CD8-positive, alpha-beta T cell (primary cell): ENCODE measurements at regions of chrX and their contacts with region 1.

Region 1: DNA sequence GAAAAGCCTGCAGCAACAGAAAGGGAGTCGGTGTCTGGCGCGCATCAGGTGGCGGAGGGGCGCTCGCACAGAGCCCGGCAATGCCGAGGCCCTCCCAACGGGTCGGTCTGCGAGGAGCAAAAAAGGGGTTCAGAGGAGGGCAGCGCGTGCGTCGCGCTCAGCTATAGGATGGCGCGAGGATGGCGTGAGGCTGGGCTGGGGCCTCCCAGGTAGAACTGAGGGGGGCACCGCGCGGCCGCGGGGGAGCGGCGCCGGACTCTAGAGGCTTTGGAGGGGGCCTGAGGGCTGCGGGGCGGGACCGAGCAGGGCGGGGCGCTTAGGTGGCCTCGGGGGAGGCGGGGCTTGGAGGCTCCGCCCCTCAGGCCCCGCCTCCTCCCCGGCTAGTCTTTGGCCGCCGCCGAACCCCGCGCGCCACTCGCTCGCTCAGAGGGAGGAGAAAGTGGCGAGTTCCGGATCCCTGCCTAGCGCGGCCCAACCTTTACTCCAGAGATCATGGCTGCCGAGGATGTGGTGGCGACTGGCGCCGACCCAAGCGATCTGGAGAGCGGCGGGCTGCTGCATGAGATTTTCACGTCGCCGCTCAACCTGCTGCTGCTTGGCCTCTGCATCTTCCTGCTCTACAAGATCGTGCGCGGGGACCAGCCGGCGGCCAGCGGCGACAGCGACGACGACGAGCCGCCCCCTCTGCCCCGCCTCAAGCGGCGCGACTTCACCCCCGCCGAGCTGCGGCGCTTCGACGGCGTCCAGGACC is at the start of gene PGRMC1:
- DNase-seq: peak; percentile 51 to 90 (median 76)
- ATAC-seq: peak; percentile 94
- H3K4me3 ChIP-seq: peak within 1 kb of the TSS; percentile 55 to 68
- H3K4me3 Mint-ChIP-seq: peak within 1 kb of the TSS; percentile 83
- H3K27ac ChIP-seq: peak within 1 kb of the TSS; percentile 25 to 63
- H3K27ac Mint-ChIP-seq: peak within 1 kb of the TSS; percentile 91
- H3K4me1 ChIP-seq: peaks cover 8% of the 10 kb centered on the region
- H3K4me1 Mint-ChIP-seq: peaks cover 39% of the 10 kb centered on the region
- H3K27me3 ChIP-seq: no peaks in the 10 kb centered on the region
- H3K27me3 Mint-ChIP-seq: no peaks in the 10 kb centered on the region
- CTCF ChIP-seq: no peak
- total RNA-seq, gene PGRMC1: 15.2 to 18.4 TPM

Region 2: GRCh38 chrX:117376460-117376859 is 1859.6 kb before region 1 on chrX:
- CTCF ChIA-PET with region 1: no interaction called
- POLR2A ChIA-PET with region 1: no interaction called
- intact Hi-C with region 1: no loop called
- DNase-seq: no peak
- ATAC-seq: no peak
- H3K4me3 ChIP-seq: no peak overlapping the region
- H3K4me3 Mint-ChIP-seq: no peak overlapping the region
- H3K27ac ChIP-seq: no peak overlapping the region
- H3K27ac Mint-ChIP-seq: no peak overlapping the region
- H3K4me1 ChIP-seq: no peaks in the 10 kb centered on the region
- H3K4me1 Mint-ChIP-seq: no peaks in the 10 kb centered on the region
- H3K27me3 ChIP-seq: no peaks in the 10 kb centered on the region
- H3K27me3 Mint-ChIP-seq: no peaks in the 10 kb centered on the region
- CTCF ChIP-seq: no peak

Region 3: GRCh38 chrX:118345401-118346257 is 890.4 kb before region 1 on chrX and contains the start of gene WDR44:
- CTCF ChIA-PET with region 1: no interaction called
- POLR2A ChIA-PET with region 1: no interaction called
- intact Hi-C with region 1: loop called in 1 of 2 experiments (anchors 5 kb)
- DNase-seq: peak; percentile 86 to 96 (median 90)
- ATAC-seq: peak; percentile 90
- H3K4me3 ChIP-seq: peak within 1 kb of the TSS; percentile 70 to 87
- H3K4me3 Mint-ChIP-seq: peak within 1 kb of the TSS; percentile 98
- H3K27ac ChIP-seq: peak within 1 kb of the TSS; percentile 87 to 89
- H3K27ac Mint-ChIP-seq: peak within 1 kb of the TSS; percentile 97
- H3K4me1 ChIP-seq: peaks cover 26% of the 10 kb centered on the region
- H3K4me1 Mint-ChIP-seq: peaks cover 34% of the 10 kb centered on the region
- H3K27me3 ChIP-seq: no peaks in the 10 kb centered on the region
- H3K27me3 Mint-ChIP-seq: no peaks in the 10 kb centered on the region
- CTCF ChIP-seq: no peak
- total RNA-seq, gene WDR44: 9.9 to 11.2 TPM

Region 4: DNA sequence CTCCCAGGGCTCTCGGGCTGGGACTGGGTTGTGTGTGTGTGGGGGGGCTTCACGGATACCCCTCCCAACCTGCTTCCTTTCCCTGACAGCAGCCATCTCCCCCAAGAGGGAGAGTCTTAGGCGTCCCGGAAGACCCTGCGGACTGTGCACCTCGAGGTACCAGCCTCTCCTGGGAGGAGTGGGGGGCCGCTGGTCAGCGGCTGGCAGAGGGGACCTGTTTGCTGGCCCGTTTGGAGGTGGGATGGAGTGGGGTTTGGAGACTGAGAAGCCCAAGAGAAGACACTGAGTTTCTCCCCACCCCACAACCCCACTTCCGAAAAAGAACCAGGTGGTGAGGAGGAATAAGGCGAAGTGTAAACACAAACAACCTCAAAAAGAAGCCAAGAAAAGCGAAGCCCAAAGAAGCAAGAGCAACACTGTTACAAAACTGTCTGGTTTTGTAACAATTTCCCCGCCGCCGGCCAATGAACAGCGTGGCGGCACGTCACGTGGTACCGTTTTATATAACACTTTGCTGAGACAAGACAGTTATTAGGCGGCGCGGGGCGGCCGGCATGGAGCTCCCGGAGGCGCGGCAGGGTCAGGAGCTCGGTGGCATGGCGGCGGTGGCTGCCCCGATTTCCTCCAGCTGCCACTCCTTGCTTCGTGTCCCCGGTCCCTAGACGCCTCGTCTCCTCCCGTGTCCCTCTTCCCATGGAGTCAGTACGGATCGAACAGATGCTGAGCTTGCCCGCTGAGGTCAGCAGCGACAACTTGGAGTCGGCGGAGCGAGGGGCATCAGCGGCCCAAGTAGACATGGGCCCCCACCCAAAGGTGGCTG is 261.7 kb before region 1 on chrX and contains the start of gene LONRF3:
- CTCF ChIA-PET with region 1: no interaction called
- POLR2A ChIA-PET with region 1: no interaction called
- intact Hi-C with region 1: loop called in 1 of 2 experiments (anchors 10 kb)
- DNase-seq: peak; percentile 26 to 80 (median 63)
- ATAC-seq: peak; percentile 50
- H3K4me3 ChIP-seq: peak within 1 kb of the TSS; percentile 59 to 72
- H3K4me3 Mint-ChIP-seq: peak within 1 kb of the TSS; percentile 87
- H3K27ac ChIP-seq: peak within 1 kb of the TSS; percentile 49 to 70
- H3K27ac Mint-ChIP-seq: peak within 1 kb of the TSS; percentile 91
- H3K4me1 ChIP-seq: peaks cover 6% of the 10 kb centered on the region
- H3K4me1 Mint-ChIP-seq: peaks cover 21% of the 10 kb centered on the region
- H3K27me3 ChIP-seq: no peaks in the 10 kb centered on the region
- H3K27me3 Mint-ChIP-seq: peaks cover 8% of the 10 kb centered on the region
- CTCF ChIP-seq: no peak
- total RNA-seq, gene LONRF3: 3.8 to 4.3 TPM

Region 5: GRCh38 chrX:119309661-119310267 is 73.7 kb after region 1 on chrX:
- CTCF ChIA-PET with region 1: no interaction called
- POLR2A ChIA-PET with region 1: no interaction called
- intact Hi-C with region 1: no loop called
- DNase-seq: no peak
- ATAC-seq: no peak
- H3K4me3 ChIP-seq: no peak overlapping the region
- H3K4me3 Mint-ChIP-seq: no peak overlapping the region
- H3K27ac ChIP-seq: no peak overlapping the region
- H3K27ac Mint-ChIP-seq: no peak overlapping the region
- H3K4me1 ChIP-seq: no peaks in the 10 kb centered on the region
- H3K4me1 Mint-ChIP-seq: no peaks in the 10 kb centered on the region
- H3K27me3 ChIP-seq: no peaks in the 10 kb centered on the region
- H3K27me3 Mint-ChIP-seq: peaks cover 4% of the 10 kb centered on the region
- CTCF ChIP-seq: no peak

Region 6: GRCh38 chrX:119398974-119399771 is 163.1 kb after region 1 on chrX and contains the start of gene SLC25A43:
- CTCF ChIA-PET with region 1: no interaction called
- POLR2A ChIA-PET with region 1: no interaction called
- intact Hi-C with region 1: loop called in 1 of 2 experiments (anchors 10 kb)
- DNase-seq: peak in 7 of 9 experiments; percentile 22 to 63 (median 26)
- ATAC-seq: peak; percentile 77
- H3K4me3 ChIP-seq: peak within 1 kb of the TSS; percentile 57 to 58
- H3K4me3 Mint-ChIP-seq: peak within 1 kb of the TSS; percentile 88
- H3K27ac ChIP-seq: peak within 1 kb of the TSS; percentile 20 to 66
- H3K27ac Mint-ChIP-seq: peak within 1 kb of the TSS; percentile 90
- H3K4me1 ChIP-seq: peaks cover 6% of the 10 kb centered on the region
- H3K4me1 Mint-ChIP-seq: peaks cover 24% of the 10 kb centered on the region
- H3K27me3 ChIP-seq: no peaks in the 10 kb centered on the region
- H3K27me3 Mint-ChIP-seq: no peaks in the 10 kb centered on the region
- CTCF ChIP-seq: no peak
- total RNA-seq, gene SLC25A43: 1.1 to 1.4 TPM

Region 7: DNA sequence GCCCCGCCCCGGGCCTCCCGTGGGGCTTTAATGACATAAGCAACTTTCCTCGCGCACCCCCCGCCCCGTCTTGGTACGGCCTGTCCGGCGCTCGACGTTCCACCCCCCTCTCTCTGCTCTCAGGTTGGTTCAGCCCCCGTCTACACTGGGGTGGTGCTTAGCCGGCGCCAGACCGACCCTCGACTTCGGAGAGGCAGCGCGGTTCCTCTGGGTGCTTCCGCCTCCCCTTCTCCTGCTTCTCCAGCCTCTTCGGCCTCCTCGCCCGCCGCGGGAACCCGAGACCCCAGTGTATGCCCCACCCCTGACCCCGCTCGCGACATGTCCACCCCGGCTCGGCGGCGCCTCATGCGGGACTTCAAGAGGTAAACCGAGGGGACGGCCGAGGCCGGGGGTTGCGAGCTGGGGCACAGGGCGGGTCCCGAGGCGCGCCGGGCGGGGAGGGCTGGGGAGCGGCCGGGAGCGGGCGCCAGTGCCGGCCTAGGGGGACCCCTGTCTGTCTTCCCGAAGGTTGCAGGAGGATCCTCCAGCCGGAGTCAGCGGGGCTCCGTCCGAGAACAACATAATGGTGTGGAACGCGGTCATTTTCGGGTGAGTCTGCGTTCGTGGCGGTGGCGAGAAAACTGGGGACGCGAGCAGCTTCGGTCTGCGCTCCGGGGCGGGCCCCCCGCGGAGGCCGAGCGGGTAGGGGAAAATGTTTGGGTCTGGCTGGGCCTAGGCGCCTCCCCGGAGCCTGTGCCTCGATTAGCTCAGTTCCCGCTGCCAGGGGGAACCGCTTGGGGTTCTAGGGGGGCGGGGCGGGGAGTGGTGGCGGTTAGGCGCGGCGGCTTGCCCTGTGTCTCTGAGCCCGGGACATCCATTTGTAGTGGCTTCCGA is 338.6 kb after region 1 on chrX and contains the start of gene UBE2A:
- CTCF ChIA-PET with region 1: no interaction called
- POLR2A ChIA-PET with region 1: no interaction called
- intact Hi-C with region 1: loop called in 1 of 2 experiments (anchors 5 kb)
- DNase-seq: peak; percentile 80 to 95 (median 89)
- ATAC-seq: peak; percentile 95
- H3K4me3 ChIP-seq: peak within 1 kb of the TSS; percentile 70 to 73
- H3K4me3 Mint-ChIP-seq: peak within 1 kb of the TSS; percentile 92
- H3K27ac ChIP-seq: peak within 1 kb of the TSS; percentile 80 to 83
- H3K27ac Mint-ChIP-seq: peak within 1 kb of the TSS; percentile 92
- H3K4me1 ChIP-seq: peaks cover 8% of the 10 kb centered on the region
- H3K4me1 Mint-ChIP-seq: peaks cover 20% of the 10 kb centered on the region
- H3K27me3 ChIP-seq: no peaks in the 10 kb centered on the region
- H3K27me3 Mint-ChIP-seq: no peaks in the 10 kb centered on the region
- CTCF ChIP-seq: no peak
- total RNA-seq, gene UBE2A: 101 to 103 TPM

Region 8: DNA sequence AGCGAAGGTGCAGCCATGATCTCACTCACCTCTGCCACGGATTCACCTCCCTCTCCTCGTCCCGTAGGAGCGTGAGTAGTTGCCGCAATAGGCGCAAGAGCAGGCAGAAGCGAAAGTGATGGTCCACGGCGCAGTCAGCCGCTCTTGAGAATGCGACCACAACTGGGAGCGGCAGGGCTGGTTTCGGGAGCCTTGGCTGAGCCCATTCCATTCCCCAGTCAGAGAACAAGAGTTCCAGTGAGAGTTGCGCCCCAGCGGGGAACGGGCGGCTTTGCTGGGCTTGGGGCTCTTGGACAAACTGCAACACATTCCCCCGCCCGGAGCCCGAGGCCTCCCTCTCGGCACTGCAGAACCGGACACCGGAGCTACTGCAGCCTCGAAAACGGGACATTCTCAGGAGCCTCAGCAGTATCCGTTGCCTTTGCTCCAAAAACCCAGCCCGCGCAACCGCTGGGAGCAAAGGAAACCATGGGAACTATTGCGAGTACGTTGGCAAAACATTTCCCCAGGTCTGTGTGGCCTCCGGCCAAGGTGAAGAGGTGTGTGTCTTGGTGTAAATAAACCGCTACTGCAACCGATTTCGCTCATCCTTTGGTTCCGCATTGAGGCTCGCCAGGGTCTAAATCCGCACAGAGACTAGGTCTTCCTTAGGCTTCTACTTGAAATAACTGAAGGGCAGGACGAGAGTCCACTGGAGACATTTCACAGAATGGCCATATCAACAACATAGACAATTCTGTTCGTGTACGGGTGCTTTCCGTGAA is 1008.9 kb after region 1 on chrX:
- CTCF ChIA-PET with region 1: no interaction called
- POLR2A ChIA-PET with region 1: no interaction called
- intact Hi-C with region 1: loop called in 1 of 2 experiments (anchors 10 kb)
- DNase-seq: peak; percentile 28 to 77 (median 59)
- ATAC-seq: peak; percentile 88
- H3K4me3 ChIP-seq: peak overlapping the region; percentile 87 to 90
- H3K4me3 Mint-ChIP-seq: peak overlapping the region; percentile 98
- H3K27ac ChIP-seq: peak overlapping the region; percentile 73 to 90
- H3K27ac Mint-ChIP-seq: peak overlapping the region; percentile 93
- H3K4me1 ChIP-seq: peaks cover 15% of the 10 kb centered on the region
- H3K4me1 Mint-ChIP-seq: peaks cover 26% of the 10 kb centered on the region
- H3K27me3 ChIP-seq: no peaks in the 10 kb centered on the region
- H3K27me3 Mint-ChIP-seq: peaks cover 2% of the 10 kb centered on the region
- CTCF ChIP-seq: no peak

Region 9: DNA sequence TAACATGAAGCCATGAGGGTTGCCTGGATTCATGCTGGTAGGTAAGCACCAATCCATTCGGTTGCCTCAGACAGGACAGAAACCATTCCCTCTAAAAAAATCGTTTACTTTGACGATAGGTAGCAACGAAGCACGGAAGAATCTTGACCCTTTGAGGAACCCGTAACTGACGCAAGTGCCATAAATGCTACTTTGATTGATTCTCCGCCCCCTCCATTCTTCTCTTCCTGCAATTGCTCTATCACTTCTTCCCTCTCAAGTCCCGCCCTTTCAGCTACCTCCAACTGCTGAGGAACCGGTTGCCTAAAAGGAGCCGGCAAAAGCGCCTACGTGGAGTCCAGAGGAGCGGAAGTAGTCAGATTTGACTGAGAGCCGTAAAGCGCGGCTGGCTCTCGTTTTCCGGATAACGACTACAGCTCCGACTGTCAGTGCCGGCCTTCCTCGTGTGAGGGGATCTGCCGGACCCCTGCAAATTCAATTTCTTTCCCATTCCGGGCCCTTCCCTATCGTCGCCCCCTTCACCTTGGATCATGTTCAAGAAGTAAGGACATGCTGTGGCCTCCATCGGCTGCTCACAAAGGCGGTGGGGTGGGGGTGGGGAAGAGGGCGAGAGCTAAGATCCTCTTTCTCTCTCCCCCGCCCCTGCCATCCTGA is 1367.8 kb after region 1 on chrX and contains the start of gene MCTS1:
- CTCF ChIA-PET with region 1: no interaction called
- POLR2A ChIA-PET with region 1: no interaction called
- intact Hi-C with region 1: loop called in 1 of 2 experiments (anchors 5 kb)
- DNase-seq: peak; percentile 52 to 93 (median 71)
- ATAC-seq: peak; percentile 87
- H3K4me3 ChIP-seq: peak within 1 kb of the TSS; percentile 76 to 91
- H3K4me3 Mint-ChIP-seq: peak within 1 kb of the TSS; percentile 95
- H3K27ac ChIP-seq: peak within 1 kb of the TSS; percentile 87 to 92
- H3K27ac Mint-ChIP-seq: peak within 1 kb of the TSS; percentile 97
- H3K4me1 ChIP-seq: peaks cover 15% of the 10 kb centered on the region
- H3K4me1 Mint-ChIP-seq: peaks cover 15% of the 10 kb centered on the region
- H3K27me3 ChIP-seq: no peaks in the 10 kb centered on the region
- H3K27me3 Mint-ChIP-seq: no peaks in the 10 kb centered on the region
- CTCF ChIP-seq: no peak
- total RNA-seq, gene MCTS1: 7.0 to 9.2 TPM